ENCODE measurements at regions of chr1 and their contacts with region 1.

Region 1: DNA sequence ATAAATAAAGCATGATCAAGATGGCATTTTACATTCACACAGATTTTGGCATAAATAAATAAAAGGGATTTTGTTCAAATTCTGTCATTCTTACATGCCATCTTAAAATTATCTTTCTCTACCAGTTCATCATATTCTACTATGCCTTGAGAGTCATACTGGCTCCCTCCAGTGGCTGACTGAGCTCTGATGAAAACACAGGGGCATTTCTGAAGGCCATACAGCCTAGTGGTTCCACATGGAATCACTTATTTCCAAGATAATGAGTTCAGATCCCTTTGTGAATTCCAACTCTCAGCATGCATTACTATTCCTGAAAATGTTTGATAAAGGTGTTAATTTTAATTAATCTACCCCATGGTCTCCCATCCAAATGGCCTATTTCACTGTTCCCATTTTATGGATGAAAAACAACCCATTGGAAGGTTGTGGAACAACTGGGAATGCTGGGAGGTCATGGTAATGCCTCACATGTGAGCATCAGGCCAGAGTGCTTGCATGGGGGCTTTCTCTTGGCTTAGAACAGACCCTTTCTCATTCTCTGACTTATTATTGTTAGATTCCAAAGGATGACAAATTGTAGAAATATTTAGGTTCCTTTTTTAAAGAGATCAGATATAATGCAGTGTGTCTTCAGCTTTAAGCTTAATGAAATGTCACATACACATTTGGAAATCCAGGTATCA is 622.4 kb upstream of the PKN2 start:
- DNase-seq: no peak

Region 2: DNA sequence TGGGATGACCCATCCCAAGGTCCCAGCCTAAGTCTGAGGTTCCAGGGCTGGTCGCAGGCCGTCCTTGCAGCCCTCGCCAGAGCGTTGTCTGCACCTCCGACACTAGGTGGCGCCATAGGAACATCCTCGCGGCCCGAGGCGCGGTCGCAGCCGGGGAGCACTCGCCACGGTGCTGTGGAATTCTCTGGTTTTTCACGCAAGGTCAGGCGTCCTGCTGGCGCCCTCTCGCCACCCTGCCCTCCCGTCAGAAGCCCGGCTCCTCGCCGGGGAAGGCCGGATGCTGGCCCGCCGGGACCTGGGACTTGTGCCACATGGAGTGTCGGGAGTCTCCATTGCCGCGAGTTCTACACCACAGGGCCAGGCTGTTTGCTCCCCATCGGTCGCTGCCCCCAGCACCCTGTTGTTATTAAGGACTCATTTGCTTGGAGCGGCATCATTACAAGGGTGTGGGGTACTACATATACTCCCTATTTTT is 929.8 kb before region 1 on chr1:
- intact Hi-C with region 1: loop called (anchors 10 kb)
- DNase-seq: peak; percentile 94

Region 3: GRCh38 chr1:87292684-87293493 is 768.7 kb before region 1 on chr1:
- intact Hi-C with region 1: loop called (anchors 5 kb)
- DNase-seq: no peak